Head of caudate nucleus (tissue), 42 donors: ENCODE measurements at regions of chr10 and their contacts with region 1.

Region 1: DNA sequence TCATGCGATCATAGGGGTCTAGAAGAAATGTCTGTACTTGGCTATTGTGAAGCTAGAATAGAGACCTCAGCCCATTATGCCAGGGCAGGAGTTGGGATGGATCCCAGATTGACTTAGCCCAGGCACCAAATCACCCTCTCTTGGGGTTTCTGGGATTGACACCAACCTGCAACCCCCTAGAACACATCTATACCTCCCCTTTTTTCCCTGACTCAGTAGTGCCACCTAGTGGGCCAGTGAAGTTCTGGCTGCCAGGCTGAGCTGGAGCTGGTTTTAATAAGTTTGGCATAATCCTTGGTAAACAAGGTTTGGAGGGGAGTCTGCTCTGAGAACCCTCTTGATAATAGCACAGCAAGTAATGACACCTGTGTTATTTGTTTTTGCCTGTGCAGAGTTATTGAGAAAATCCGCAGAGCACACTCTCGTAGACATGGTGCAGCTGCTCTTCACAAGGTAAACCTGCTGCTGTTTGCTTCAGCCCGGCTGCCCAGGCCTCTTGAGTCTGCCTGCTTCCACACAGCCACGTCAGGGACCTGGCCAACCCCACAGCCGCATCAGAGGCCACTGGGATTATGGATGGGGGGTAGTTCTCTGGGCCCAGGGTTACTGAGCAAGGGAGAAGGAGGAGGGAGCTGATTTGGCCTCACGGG is 43.3 kb upstream of the NFKB2 start:
- DNase-seq: peak in 40 of 42 donors; percentile 7 to 84 (median 61)

Region 2: GRCh38 chr10:102167861-102168260 is 184.3 kb before region 1 on chr10:
- intact Hi-C with region 1: loop called (anchors 10 kb)
- DNase-seq: no peak

Region 3: DNA sequence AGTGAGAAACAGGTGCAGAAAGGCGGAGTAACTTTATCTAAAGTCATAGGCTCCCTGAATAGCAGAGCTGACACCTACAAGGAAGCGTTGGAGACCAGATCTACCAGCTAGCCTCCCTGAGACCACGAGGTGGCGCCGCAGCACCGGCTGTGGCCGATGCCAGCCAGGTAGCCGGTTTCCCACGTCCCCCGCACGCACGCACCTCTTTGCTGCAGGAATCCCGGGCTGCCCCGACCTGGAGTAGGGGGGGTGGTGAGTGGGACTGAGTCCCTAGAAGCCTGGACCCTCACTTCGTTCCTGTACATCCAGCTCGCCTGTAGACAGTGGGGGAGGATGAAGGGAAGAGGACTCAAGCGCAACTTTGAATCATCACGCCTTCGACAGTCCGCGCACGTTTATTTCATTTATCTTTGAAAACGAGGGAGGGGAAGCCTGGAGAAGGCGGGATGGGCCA is 122.4 kb before region 1 on chr10:
- intact Hi-C with region 1: loop called (anchors 2 kb)
- DNase-seq: peak; percentile 73 to 94 (median 88)

Region 4: DNA sequence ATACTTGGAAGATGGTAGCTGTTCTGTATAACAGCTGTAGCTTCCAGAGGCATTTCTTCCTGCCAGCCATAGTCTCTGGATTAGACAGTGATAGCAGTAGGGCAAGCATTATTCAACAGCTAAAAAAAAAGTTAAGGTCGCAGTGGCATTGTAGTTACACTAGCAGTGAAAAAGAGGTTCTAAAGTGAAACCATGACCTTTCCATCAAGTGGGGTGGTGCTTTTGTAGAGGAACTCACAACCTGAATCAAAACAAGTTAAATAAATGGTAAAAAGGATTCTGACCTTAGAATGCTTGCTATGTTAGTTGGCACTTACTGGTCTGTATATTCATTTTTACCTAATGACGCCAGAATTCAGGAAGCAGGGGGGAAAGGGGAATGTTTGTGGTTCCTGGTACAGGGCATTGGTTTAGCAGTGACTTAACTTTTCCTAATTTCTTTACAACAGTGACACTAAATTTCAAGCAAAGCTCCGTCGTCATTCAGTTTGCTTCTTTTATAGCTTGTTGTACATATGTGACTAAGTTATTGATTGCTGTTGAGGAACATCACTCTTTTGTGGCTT is 51.8 kb before region 1 on chr10:
- intact Hi-C with region 1: no loop called
- DNase-seq: no peak

Region 5: DNA sequence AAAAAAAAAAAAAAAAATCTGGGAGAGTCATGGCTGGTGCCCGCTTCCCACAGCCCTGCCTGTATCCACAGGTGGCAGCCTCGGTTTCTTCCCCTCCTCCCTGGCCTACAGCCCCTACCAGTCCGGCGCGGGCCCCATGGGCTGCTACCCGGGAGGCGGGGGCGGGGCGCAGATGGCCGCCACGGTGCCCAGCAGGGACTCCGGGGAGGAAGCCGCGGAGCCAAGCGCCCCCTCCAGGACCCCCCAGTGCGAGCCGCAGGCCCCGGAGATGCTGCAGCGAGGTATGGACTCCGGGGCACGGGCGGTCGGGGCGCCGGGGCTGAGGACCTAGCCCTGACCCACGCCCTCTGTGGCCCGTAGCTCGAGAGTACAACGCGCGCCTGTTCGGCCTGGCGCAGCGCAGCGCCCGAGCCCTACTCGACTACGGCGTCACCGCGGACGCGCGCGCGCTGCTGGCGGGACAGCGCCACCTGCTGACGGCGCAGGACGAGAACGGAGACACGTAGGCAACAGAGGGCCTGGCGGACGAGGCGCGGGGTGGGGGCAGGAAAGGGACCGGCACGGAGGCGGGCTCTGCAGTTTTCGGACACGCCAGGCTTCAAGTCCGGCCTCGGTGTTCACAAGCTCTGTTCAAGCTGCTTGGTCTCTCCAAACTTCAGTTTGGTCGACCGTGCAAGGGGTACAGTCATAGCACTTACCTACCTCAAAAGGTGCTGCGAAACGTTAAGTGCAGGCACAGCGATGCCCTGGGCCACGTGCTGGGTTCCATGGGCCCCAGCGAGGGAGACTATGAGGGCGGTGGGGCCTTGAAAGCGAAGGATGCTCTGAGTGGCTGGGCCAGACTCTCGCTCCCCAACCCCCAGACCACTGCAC is 47.3 kb after region 1 on chr10:
- intact Hi-C with region 1: no loop called
- DNase-seq: peak; percentile 80 to 95 (median 91)

Region 6: DNA sequence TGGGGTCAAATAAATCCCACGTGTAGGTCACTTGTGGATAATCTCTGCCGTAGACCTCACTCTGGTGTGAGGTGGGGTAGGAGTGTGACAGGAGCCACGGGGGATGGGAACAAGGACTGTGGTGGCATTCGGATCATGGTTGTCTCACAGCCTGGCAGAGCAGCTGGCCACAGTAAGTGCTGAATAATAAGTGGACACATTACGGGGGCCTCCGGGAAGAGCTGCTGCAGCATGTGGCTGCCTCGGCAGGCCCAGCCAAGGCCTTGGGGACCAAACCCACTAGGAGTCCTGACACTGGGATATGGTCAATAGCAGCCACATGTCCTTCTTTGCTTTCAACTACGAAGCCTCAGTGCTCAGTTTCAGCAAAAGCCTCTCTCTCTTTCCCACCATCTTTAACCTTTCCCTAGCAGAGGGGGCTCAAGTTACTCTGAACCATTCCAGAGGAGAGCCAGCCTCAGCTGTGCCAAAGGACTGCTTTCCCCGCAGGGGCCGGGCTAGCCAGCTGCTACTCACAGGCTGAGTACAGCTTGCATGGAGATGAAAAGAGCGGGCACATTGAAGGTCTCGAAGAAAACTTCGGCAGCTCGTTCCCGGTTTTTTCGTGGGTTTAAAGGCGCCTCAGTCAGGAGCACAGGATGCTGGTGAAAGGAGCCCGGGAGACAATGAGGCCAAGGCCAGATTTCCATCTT is 133.0 kb after region 1 on chr10:
- intact Hi-C with region 1: no loop called
- DNase-seq: peak in 3 of 42 donors; percentile 28 to 34 (median 31)